Sigmoid colon (tissue), 7 donors: ENCODE measurements at regions of chr15 and their contacts with region 1.

Region 1: DNA sequence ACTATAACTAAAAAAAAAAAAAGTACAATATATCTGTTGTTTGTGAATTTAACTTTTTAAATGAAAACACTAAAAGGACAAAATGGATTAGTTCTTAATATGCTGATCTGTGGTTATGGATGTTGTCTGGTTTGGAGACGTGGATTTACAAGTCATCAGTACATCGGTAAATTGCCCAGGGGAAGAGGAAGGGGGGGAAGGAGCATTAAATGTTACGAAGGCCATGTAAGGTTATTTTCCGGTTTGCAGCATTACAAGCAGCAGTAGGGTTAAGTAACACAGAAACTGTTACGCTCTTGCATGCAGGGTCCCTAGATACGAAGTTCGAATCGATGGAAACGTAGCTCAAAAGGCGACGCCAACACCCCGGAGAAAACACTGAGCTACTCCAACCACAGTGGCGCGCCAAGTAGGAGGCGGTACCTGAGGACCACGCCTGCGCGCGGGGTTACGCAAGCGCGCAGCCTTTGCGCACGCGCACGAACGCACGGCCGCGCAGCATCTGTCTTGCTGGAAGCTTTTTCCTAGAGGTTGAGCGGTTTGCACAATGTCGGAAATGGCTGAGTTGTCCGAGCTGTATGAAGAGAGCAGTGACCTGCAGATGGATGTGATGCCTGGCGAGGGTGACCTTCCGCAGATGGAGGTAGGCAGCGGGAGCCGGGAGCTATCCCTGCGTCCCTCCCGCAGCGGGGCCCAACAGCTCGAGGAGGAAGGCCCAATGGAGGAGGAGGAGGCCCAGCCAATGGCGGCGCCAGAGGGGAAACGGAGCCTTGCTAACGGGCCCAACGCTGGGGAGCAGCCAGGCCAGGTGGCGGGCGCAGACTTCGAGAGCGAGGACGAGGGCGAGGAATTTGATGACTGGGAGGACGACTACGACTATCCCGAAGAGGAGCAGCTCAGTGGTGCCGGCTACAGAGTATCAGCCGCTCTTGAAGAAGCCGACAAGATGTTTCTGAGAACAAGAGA is at the start of gene EID1:
- DNase-seq: peak; percentile 97
- H3K4me3 ChIP-seq: peak within 1 kb of the TSS; percentile 72 to 89 (median 81)
- H3K27ac ChIP-seq: peak within 1 kb of the TSS; percentile 91 to 95 (median 92)
- H3K4me1 ChIP-seq: peaks cover 0 to 20% (median 11%) of the 10 kb centered on the region in 4 donors
- H3K27me3 ChIP-seq: no peaks in the 10 kb centered on the region
- CTCF ChIP-seq: no peak
- EP300 ChIP-seq: no peak
- POLR2A ChIP-seq: peak; percentile 76 to 81
- total RNA-seq, gene EID1: 291 to 343 (median 332) TPM

Region 2: GRCh38 chr15:48963524-48964113 is 85.7 kb after region 1 on chr15 and contains the start of gene SHC4:
- intact Hi-C with region 1: loop called (anchors 5 kb)
- DNase-seq: peak; percentile 87
- H3K4me3 ChIP-seq: peak within 1 kb of the TSS; percentile 33 to 56 (median 52)
- H3K27ac ChIP-seq: peak within 1 kb of the TSS; percentile 9 to 50 (median 36)
- H3K4me1 ChIP-seq: peaks cover 0 to 23% (median 20%) of the 10 kb centered on the region in 4 donors
- H3K27me3 ChIP-seq: no peaks in the 10 kb centered on the region
- CTCF ChIP-seq: peak in 1 of 4 experiments; percentile 18
- EP300 ChIP-seq: no peak
- POLR2A ChIP-seq: no peak
- total RNA-seq, gene SHC4: 2.1 to 4.6 (median 2.6) TPM

Region 3: DNA sequence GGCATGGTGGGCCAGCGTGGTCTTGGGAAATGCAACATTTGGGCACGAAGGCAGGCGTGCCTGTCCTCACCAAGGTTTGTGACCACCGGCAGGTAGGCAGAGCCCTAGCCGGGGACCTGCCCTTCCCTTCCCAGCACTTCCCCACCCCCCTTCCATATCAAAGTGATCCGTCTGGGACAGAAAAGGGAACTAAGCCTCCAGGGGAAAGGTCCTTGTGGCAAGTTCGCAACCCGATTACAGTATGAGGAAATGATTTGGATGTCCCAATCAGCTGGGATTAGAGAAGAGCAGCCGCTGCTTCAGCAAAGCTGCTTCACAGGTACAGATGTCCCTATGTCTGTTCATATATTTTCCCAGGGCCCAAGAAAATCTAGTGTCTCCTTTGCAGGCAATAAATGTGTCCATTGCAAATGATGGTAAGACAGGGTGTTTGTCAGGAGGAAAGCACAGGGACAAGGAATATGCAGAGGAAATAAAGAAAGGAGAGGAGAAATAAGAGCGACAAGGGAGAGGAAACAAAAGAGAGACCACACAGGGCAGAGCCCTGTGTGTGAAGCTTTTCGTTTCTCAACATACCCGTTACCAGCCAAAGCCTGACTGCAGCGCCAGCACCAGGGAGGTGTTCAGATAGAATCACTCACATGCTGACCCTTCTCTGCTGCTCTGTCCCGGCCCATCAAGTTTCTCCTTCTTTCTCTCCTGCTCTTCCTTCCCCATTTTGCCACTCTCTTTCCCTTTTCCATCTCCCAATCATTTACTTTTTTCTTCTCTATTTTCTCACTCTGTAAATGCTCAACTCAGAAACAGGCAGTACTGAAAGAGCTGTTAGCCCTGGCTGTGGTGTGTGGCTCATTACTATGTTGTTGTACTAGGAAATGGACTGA is 185.7 kb after region 1 on chr15:
- intact Hi-C with region 1: no loop called
- DNase-seq: no peak
- H3K4me3 ChIP-seq: no peak overlapping the region
- H3K27ac ChIP-seq: no peak overlapping the region
- H3K4me1 ChIP-seq: no peaks in the 10 kb centered on the region
- H3K27me3 ChIP-seq: no peaks in the 10 kb centered on the region
- CTCF ChIP-seq: no peak
- EP300 ChIP-seq: no peak
- POLR2A ChIP-seq: no peak

Region 4: GRCh38 chr15:49415638-49416037 is 537.7 kb after region 1 on chr15:
- intact Hi-C with region 1: loop called (anchors 5 kb)
- DNase-seq: no peak
- H3K4me3 ChIP-seq: no peak overlapping the region
- H3K27ac ChIP-seq: no peak overlapping the region
- H3K4me1 ChIP-seq: peaks cover 0 to 13% (median 8%) of the 10 kb centered on the region in 4 donors
- H3K27me3 ChIP-seq: no peaks in the 10 kb centered on the region
- CTCF ChIP-seq: no peak
- EP300 ChIP-seq: no peak
- POLR2A ChIP-seq: no peak